PC-3 (cell line): ENCODE measurements at regions of chr1 and their contacts with region 1.

Region 1: GRCh38 chr1:151165738-151166505 is at the starts of genes LYSMD1 and SCNM1:
- DNase-seq: peak; percentile 100
- ATAC-seq: peak; percentile 93
- H3K4me3 ChIP-seq: peak within 1 kb of the TSS; percentile 85
- H3K27ac ChIP-seq: peak within 1 kb of the TSS; percentile 25
- H3K4me1 ChIP-seq: peaks cover 18% of the 10 kb centered on the region
- H3K27me3 ChIP-seq: no peaks in the 10 kb centered on the region
- CTCF ChIP-seq: no peak
- total RNA-seq, gene LYSMD1: 6.3 and 7.5 TPM in 2 replicates
- total RNA-seq, gene SCNM1: 80.3 and 82.4 TPM in 2 replicates

Region 2: DNA sequence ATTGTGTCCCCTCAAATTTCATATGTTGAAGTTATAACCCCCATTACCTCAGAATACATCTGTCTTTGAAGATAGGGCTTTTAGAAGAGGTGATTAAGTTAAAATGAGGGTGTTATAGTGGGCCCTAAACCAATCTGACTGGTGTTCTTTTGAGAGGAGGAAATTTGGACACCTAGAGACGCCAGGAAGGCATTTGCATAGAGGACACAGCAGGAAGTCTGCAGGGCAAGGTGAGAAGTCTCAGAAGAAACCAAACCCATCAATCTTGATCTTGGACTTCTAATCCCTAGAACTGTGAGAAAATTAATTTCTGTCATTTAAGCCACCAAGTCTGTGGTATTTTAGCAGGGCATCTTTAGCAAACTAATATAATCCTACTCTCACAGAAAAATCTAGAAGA is 482.0 kb before region 1 on chr1:
- CTCF ChIA-PET with region 1: no interaction called
- POLR2A ChIA-PET with region 1: no interaction called
- intact Hi-C with region 1: no loop called
- DNase-seq: no peak
- ATAC-seq: no peak
- H3K4me3 ChIP-seq: no peak overlapping the region
- H3K27ac ChIP-seq: no peak overlapping the region
- H3K4me1 ChIP-seq: peaks cover 7% of the 10 kb centered on the region
- H3K27me3 ChIP-seq: no peaks in the 10 kb centered on the region
- CTCF ChIP-seq: no peak

Region 3: GRCh38 chr1:151189638-151190445 is 23.9 kb after region 1 on chr1 and contains the start of gene VPS72:
- CTCF ChIA-PET with region 1: no interaction called
- POLR2A ChIA-PET with region 1: interaction called, 10 read pairs
- intact Hi-C with region 1: no loop called
- DNase-seq: peak; percentile 90
- ATAC-seq: peak; percentile 89
- H3K4me3 ChIP-seq: peak within 1 kb of the TSS; percentile 89
- H3K27ac ChIP-seq: peak within 1 kb of the TSS; percentile 65
- H3K4me1 ChIP-seq: peaks cover 28% of the 10 kb centered on the region
- H3K27me3 ChIP-seq: no peaks in the 10 kb centered on the region
- CTCF ChIP-seq: no peak
- total RNA-seq, gene VPS72: 75.1 and 94.7 TPM in 2 replicates

Region 4: GRCh38 chr1:151210830-151211229 is 44.9 kb after region 1 on chr1:
- CTCF ChIA-PET with region 1: no interaction called
- POLR2A ChIA-PET with region 1: interaction called, 10 read pairs
- intact Hi-C with region 1: no loop called
- DNase-seq: peak; percentile 62
- ATAC-seq: peak; percentile 78
- H3K4me3 ChIP-seq: no peak overlapping the region
- H3K27ac ChIP-seq: no peak overlapping the region
- H3K4me1 ChIP-seq: no peaks in the 10 kb centered on the region
- H3K27me3 ChIP-seq: no peaks in the 10 kb centered on the region
- CTCF ChIP-seq: no peak

Region 5: GRCh38 chr1:151243683-151244216 is 77.8 kb after region 1 on chr1:
- CTCF ChIA-PET with region 1: no interaction called
- POLR2A ChIA-PET with region 1: no interaction called
- intact Hi-C with region 1: no loop called
- DNase-seq: no peak
- ATAC-seq: no peak
- H3K4me3 ChIP-seq: no peak overlapping the region
- H3K27ac ChIP-seq: no peak overlapping the region
- H3K4me1 ChIP-seq: no peaks in the 10 kb centered on the region
- H3K27me3 ChIP-seq: no peaks in the 10 kb centered on the region
- CTCF ChIP-seq: no peak

Region 6: GRCh38 chr1:151326619-151327222 is 160.8 kb after region 1 on chr1:
- CTCF ChIA-PET with region 1: no interaction called
- POLR2A ChIA-PET with region 1: no interaction called
- intact Hi-C with region 1: no loop called
- DNase-seq: peak; percentile 33
- ATAC-seq: peak; percentile 18
- H3K4me3 ChIP-seq: peak overlapping the region; percentile 72
- H3K27ac ChIP-seq: peak overlapping the region; percentile 85
- H3K4me1 ChIP-seq: peaks cover 37% of the 10 kb centered on the region
- H3K27me3 ChIP-seq: no peaks in the 10 kb centered on the region
- CTCF ChIP-seq: no peak

Region 7: GRCh38 chr1:151346769-151347522 is 181.0 kb after region 1 on chr1 and contains the start of gene RFX5:
- CTCF ChIA-PET with region 1: no interaction called
- POLR2A ChIA-PET with region 1: no interaction called
- intact Hi-C with region 1: no loop called
- DNase-seq: peak; percentile 100
- ATAC-seq: peak; percentile 98
- H3K4me3 ChIP-seq: peak within 1 kb of the TSS; percentile 76
- H3K27ac ChIP-seq: peak within 1 kb of the TSS; percentile 85
- H3K4me1 ChIP-seq: peaks cover 14% of the 10 kb centered on the region
- H3K27me3 ChIP-seq: no peaks in the 10 kb centered on the region
- CTCF ChIP-seq: no peak
- total RNA-seq, gene RFX5: 34.1 and 41.0 TPM in 2 replicates